Left cardiac atrium (tissue), 4 donors: ENCODE measurements at regions of chr13 and their contacts with region 1.

Region 1: GRCh38 chr13:30306762-30307193 is 573 bp downstream of the KATNAL1 start:
- DNase-seq: peak; percentile 96
- ATAC-seq: peak; percentile 96 to 97

Region 2: GRCh38 chr13:30341815-30342570 is 35.2 kb after region 1 on chr13:
- intact Hi-C with region 1: loop called in 1 of 2 experiments (anchors 2 kb)
- DNase-seq: peak; percentile 90
- ATAC-seq: peak; percentile 81 to 84